Colonic mucosa (tissue), 4 donors: ENCODE measurements at regions of chr7 and their contacts with region 1.

Region 1: GRCh38 chr7:138981332-138982203 is at the start of gene KIAA1549:
- DNase-seq: peak; percentile 61
- H3K4me3 ChIP-seq: peak within 1 kb of the TSS; percentile 60
- H3K27ac ChIP-seq: no peak within 1 kb of the TSS
- H3K4me1 ChIP-seq: no peaks in the 10 kb centered on the region
- H3K27me3 ChIP-seq: no peaks in the 10 kb centered on the region
- CTCF ChIP-seq: no peak
- total RNA-seq, gene KIAA1549: 2.9 to 3.5 TPM

Region 2: DNA sequence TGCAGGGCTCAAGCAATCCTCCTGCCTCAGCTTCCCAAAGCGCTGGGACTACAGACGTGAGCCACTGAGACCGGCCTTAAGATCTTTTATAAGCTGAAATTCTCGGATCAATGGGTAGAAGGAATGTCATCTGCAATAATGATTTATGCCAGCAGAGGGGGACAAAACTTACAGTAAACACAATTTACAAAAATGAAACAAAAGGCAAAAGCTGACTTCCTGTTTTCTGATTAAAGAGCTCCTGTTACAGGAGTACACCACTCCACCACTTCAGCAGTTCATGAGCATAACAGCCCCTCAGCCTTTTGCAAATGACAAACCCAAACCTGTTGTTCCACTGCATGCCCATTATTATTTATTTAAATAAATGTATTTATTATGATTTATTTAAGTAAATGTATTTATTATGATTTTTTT is 95.1 kb before region 1 on chr7:
- intact Hi-C with region 1: loop called (anchors 5 kb)
- DNase-seq: peak; percentile 65
- H3K4me3 ChIP-seq: no peak overlapping the region
- H3K27ac ChIP-seq: no peak overlapping the region
- H3K4me1 ChIP-seq: peaks cover 4% of the 10 kb centered on the region
- H3K27me3 ChIP-seq: no peaks in the 10 kb centered on the region
- CTCF ChIP-seq: peak; percentile 61

Region 3: DNA sequence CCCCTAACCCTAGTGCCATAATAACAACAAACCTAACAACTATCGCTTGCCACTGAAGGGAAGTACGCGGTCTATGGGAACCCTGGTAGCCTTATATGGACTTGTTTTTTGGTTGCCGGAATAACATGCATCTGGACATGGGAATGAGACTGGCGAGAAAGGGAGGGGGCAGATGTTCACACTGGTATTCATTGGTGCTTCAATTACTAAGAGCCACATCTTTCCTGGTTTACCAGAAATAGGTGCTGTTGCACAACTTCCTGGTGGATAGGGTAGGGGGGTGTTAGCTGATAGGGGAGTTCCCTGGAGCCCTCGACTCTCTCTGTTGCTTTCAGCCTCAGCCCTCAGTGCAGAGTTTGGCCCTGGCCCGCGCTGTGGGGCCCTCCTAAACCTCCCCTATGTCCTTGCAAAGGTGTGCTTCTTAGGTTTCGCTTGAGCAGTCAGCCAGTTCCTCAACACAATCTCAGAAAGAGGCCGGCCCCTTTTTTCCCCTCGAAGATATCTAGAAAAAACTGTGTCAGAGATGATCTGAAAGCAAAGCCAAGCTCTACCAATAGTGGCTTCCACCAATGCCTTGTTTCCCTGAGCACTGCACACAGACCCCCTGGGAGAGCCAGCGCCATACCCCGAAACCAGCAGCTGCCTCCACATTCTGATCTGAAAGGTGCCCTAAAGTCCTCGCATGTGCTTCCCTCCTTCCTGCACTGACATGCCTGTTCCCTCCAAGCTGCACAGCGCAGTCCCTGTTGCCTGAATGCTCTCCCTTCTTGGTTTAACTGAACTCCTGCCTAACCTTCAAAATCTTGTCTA is 861.0 kb after region 1 on chr7:
- intact Hi-C with region 1: no loop called
- DNase-seq: peak; percentile 16
- H3K4me3 ChIP-seq: no peak overlapping the region
- H3K27ac ChIP-seq: no peak overlapping the region
- H3K4me1 ChIP-seq: peaks cover 4% of the 10 kb centered on the region
- H3K27me3 ChIP-seq: no peaks in the 10 kb centered on the region
- CTCF ChIP-seq: no peak